Uterus (tissue), 4 donors: ENCODE measurements at regions of chr9 and their contacts with region 1.

Region 1: DNA sequence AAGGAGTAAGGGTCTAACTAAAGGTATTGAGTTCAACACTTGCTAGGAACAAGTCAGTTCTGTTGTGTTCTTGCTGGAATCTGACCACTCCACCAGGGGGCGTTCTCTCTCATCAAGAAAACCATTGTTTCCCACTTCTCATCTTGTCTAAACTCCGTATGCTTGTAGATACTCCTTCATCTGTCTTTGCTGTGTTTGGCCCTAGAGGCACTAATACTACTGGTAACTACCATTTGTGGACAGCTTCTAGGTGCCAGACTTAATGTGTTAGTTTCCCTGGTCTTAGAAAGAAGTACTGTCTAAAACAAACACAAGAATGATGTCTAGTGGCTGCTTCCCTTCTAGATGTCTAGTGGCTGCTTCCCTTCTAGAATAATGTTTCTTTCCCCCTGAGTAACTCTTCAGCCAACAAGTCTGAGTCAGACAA is 18.7 kb upstream of the PTPDC1 start:
- DNase-seq: peak; percentile 72 to 86
- H3K4me3 ChIP-seq: no peak overlapping the region
- H3K27ac ChIP-seq: peak overlapping the region in 1 of 2 donors; percentile 31
- H3K4me1 ChIP-seq: no peaks in the 10 kb centered on the region
- H3K27me3 ChIP-seq: no peaks in the 10 kb centered on the region
- CTCF ChIP-seq: peak; percentile 83 to 91 (median 86)
- POLR2A ChIP-seq: no peak

Region 2: GRCh38 chr9:93268551-93269314 is 796.8 kb before region 1 on chr9:
- intact Hi-C with region 1: no loop called
- DNase-seq: no peak
- H3K4me3 ChIP-seq: no peak overlapping the region
- H3K27ac ChIP-seq: no peak overlapping the region
- H3K4me1 ChIP-seq: no peaks in the 10 kb centered on the region
- H3K27me3 ChIP-seq: no peaks in the 10 kb centered on the region
- CTCF ChIP-seq: no peak
- POLR2A ChIP-seq: no peak

Region 3: GRCh38 chr9:94178927-94179326 is 113.4 kb after region 1 on chr9:
- intact Hi-C with region 1: no loop called
- DNase-seq: no peak
- H3K4me3 ChIP-seq: no peak overlapping the region
- H3K27ac ChIP-seq: no peak overlapping the region
- H3K4me1 ChIP-seq: peaks cover 11 to 14% of the 10 kb centered on the region in 2 donors
- H3K27me3 ChIP-seq: no peaks in the 10 kb centered on the region
- CTCF ChIP-seq: no peak
- POLR2A ChIP-seq: no peak

Region 4: DNA sequence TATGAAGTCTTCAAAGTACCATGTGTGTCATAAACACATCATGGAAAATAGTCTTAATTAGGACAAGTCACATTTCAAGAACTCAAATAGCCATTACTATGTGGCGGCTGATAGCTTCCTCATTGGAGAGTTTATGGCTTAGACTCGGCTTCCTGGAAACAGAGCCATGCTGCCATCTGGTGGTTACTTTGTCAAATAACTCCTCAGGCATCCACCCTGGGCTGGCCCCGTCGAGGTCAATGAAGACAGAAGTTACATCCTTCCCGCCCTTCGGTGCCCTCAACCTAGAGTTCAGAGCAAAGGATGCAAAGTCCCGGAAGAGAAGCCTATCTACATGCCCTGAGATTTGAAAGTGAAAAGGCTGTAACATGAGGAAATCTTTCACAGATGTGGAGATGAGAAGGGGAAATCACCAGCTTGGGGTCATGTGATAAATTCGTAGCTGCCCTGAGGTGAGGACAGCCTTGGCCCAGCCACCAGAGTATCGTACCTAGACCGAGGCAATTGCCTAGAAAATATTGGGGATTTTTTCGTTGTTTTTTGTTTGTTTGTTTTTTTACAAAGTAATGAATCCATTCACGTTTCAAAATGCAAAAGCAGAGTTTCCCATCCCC is 148.1 kb after region 1 on chr9:
- intact Hi-C with region 1: loop called (anchors 2 kb)
- DNase-seq: peak; percentile 70 to 74
- H3K4me3 ChIP-seq: no peak overlapping the region
- H3K27ac ChIP-seq: no peak overlapping the region
- H3K4me1 ChIP-seq: no peaks in the 10 kb centered on the region
- H3K27me3 ChIP-seq: no peaks in the 10 kb centered on the region
- CTCF ChIP-seq: peak; percentile 79 to 92 (median 88)
- POLR2A ChIP-seq: no peak